Activated CD4-positive, alpha-beta T cell treated with anti-CD3 and anti-CD28 coated beads for 36 hours (primary cell): ENCODE measurements at regions of chr5 and their contacts with region 1.

Region 1: GRCh38 chr5:135376961-135377624 is 21.9 kb downstream of the MACROH2A1 start:
- DNase-seq: peak; percentile 76
- ATAC-seq: peak; percentile 93
- H3K4me3 Mint-ChIP-seq: no peak overlapping the region
- H3K27ac Mint-ChIP-seq: peak overlapping the region; percentile 22
- H3K4me1 Mint-ChIP-seq: peaks cover 73% of the 10 kb centered on the region
- H3K27me3 Mint-ChIP-seq: no peaks in the 10 kb centered on the region

Region 2: DNA sequence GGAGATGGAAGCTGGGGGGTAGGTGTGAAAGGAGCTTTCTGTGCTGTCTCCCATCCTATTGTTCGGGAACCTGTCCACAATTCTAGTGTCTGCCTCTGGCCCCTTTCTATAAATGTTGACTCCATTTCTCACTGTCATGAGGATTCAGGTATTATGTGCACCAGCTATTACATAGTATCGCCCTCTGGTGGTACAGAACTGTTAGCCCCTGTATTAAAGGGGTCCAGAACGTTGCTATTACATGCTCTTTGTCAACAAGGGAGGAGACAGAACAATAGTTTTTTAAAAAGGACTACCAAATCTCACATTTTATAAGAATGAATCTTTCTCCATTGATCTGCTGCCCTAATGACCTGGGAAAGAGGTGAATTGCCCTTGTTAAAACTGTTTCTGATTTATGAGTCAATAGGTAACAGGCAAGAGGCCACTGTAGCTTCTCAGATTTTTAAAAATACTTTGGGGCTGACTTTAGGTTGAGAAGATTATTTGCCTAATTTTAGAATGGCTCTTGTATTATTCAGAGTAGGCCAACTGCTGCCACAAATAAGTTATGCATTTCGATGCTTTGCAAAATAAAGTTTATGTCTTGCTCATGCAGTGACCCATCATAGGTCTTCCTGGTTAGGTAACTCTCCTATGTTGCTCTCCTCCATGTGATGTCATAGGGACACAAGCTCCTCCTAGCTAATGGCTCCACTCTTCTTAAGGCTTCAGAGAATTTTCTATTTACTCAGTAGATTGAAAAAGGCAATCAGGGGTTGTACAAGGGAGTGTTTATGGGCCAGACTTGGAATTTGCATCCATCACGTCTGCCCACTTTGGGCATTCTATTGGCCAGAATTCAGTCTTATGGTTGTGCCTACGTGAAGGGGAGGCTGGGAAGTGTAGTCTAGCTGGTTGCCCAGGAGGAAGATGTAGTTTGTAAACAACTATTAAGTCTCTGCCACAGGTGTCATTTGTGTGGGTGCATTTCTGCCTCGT is 49.3 kb after region 1 on chr5:
- CTCF ChIA-PET with region 1: interaction called, 4 read pairs
- POLR2A ChIA-PET with region 1: interaction called, 4 read pairs
- intact Hi-C with region 1: loop called in 1 of 2 experiments (anchors 2 kb)
- DNase-seq: peak; percentile 31
- ATAC-seq: peak; percentile 86
- H3K4me3 Mint-ChIP-seq: no peak overlapping the region
- H3K27ac Mint-ChIP-seq: no peak overlapping the region
- H3K4me1 Mint-ChIP-seq: peaks cover 4% of the 10 kb centered on the region
- H3K27me3 Mint-ChIP-seq: peaks cover 3% of the 10 kb centered on the region

Region 3: GRCh38 chr5:135578685-135579341 is 201.7 kb after region 1 on chr5 and contains the start of gene CXCL14:
- CTCF ChIA-PET with region 1: no interaction called
- POLR2A ChIA-PET with region 1: no interaction called
- intact Hi-C with region 1: no loop called
- DNase-seq: peak; percentile 55
- ATAC-seq: peak; percentile 68
- H3K4me3 Mint-ChIP-seq: no peak within 1 kb of the TSS
- H3K27ac Mint-ChIP-seq: no peak within 1 kb of the TSS
- H3K4me1 Mint-ChIP-seq: peaks cover 2% of the 10 kb centered on the region
- H3K27me3 Mint-ChIP-seq: peaks cover 55% of the 10 kb centered on the region
- total RNA-seq, gene CXCL14: not detected

Region 4: DNA sequence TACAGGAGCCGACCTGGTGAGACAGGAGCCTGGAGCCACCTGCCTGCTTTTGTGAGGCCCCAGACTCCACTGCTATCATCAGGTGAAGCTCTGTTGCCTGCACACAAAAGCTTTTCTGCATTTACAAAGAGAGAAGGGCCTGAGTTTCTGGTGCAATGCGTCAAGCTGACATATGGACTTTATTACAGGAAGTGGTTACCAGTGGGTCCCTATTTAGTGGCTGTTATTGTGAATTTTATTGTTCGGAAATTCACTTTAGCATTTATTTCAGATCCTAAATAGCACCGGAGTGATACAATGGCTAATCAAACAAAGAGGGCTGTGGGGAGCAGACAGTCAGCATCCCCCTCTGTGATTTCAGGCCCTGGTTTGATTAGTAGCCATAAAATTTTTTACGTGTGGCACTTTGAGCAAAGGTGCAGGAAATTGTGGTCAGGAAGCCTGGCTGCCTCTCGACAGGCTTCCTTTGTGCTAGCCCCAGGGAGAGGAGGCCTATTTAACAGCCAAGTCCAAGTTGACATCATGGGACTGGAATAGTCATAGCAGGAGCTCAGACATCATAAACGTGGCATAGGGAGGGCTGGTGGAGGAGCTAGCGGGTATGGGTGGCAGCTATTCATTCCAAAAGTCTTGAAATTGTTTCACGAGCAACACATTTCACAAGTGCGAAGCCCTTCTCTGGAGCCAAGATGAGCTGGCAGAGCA is 660.1 kb after region 1 on chr5:
- CTCF ChIA-PET with region 1: no interaction called
- POLR2A ChIA-PET with region 1: no interaction called
- intact Hi-C with region 1: no loop called
- DNase-seq: peak; percentile 79
- ATAC-seq: peak; percentile 97
- H3K4me3 Mint-ChIP-seq: no peak overlapping the region
- H3K27ac Mint-ChIP-seq: peak overlapping the region; percentile 59
- H3K4me1 Mint-ChIP-seq: peaks cover 25% of the 10 kb centered on the region
- H3K27me3 Mint-ChIP-seq: no peaks in the 10 kb centered on the region